ENCODE measurements at regions of chr12 and their contacts with region 1.

Region 1: GRCh38 chr12:91687052-91688017 is 458.3 kb downstream of the BTG1 start:
- DNase-seq: peak; percentile 78
- H3K4me3 Mint-ChIP-seq: peak overlapping the region; percentile 57
- H3K27ac Mint-ChIP-seq: peak overlapping the region; percentile 83
- H3K4me1 Mint-ChIP-seq: peaks cover 24% of the 10 kb centered on the region
- H3K27me3 Mint-ChIP-seq: no peaks in the 10 kb centered on the region

Region 2: DNA sequence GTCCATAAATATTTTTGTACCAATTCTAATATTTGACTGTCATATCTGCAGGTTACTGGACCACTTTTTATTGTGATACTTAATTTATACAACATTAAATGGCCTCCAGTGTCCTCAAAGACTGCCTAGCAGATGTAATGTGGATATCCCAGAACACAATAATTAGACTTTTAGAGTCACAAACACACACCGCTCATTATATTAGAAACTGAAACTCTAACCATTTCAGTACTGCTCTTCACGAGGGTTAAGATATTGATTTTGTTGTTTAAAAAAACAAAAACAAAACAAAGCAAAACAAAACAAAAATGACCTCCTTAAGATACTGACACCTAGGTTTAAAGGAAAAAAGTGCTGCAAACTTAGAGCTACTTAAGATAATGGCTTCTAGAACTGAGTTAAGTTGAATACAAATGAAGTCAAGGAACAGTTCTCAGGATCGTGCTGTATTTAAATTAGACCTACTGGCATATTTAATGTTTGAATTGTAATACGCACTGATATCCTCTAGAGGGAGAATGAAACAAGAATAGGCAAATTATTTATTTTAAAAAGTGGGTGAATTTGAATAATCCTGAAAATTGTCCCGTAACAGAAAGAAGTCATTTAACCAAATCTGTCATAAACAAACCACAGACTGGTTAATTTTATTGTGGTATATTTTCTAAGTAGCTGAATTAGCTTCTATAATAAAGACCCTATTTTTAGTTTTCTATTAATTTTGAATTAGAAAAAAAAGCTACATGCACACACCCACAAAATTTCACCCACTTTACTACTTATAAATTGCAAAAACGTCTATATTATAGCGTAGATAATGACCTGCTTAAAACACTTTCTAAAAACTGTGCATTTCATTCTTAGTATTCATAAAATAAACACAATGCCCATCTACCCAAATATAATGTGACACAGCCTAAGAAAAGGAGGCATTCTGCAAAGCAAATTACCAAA is 109.5 kb before region 1 on chr12:
- intact Hi-C with region 1: loop called (anchors 5 kb)
- DNase-seq: no peak
- H3K4me3 Mint-ChIP-seq: peak overlapping the region; percentile 74
- H3K27ac Mint-ChIP-seq: no peak overlapping the region
- H3K4me1 Mint-ChIP-seq: peaks cover 5% of the 10 kb centered on the region
- H3K27me3 Mint-ChIP-seq: peaks cover 3% of the 10 kb centered on the region

Region 3: DNA sequence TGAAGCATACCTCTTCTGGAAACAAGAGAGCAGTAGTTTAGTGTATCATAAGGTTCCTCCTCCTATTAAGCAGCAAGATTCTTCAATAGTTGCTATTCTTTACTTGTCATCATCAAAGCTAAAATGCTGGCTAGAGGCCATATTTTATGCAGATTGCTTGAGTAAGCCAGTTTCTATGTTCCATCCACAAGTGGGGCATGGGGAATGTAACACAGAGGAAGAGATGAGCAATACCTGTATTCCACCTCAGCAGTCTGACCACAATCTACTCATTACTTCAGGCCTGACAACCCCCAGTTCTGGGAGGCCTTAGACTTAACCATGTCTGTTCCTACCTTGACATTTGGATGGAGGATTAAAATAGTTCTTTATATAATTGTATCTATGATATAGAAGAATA is 34.7 kb after region 1 on chr12:
- intact Hi-C with region 1: loop called (anchors 5 kb)
- DNase-seq: no peak
- H3K4me3 Mint-ChIP-seq: no peak overlapping the region
- H3K27ac Mint-ChIP-seq: no peak overlapping the region
- H3K4me1 Mint-ChIP-seq: peaks cover 2% of the 10 kb centered on the region
- H3K27me3 Mint-ChIP-seq: no peaks in the 10 kb centered on the region

Region 4: DNA sequence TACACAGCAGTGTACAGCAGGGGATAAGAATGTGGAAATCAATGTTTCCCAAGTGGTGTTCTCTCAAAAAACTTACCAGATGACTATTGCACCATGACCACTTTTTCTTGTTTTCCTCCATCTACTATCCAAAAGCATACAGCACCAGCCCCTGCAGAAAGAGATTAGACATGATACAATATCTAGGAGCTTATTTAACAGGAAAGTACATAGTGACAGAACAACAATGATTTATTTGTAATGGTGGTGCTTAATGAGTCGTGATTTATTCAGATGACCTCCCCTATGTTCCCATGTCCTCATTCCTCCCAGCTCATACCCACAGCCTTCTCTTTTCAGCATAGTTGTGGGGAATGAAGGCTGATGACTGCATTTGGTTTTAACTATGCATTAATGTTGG is 44.8 kb after region 1 on chr12:
- intact Hi-C with region 1: no loop called
- DNase-seq: no peak
- H3K4me3 Mint-ChIP-seq: no peak overlapping the region
- H3K27ac Mint-ChIP-seq: no peak overlapping the region
- H3K4me1 Mint-ChIP-seq: no peaks in the 10 kb centered on the region
- H3K27me3 Mint-ChIP-seq: no peaks in the 10 kb centered on the region

Region 5: GRCh38 chr12:91778938-91779400 is 91.6 kb after region 1 on chr12:
- intact Hi-C with region 1: loop called (anchors 1 kb)
- DNase-seq: peak; percentile 77
- H3K4me3 Mint-ChIP-seq: peak overlapping the region; percentile 58
- H3K27ac Mint-ChIP-seq: peak overlapping the region; percentile 73
- H3K4me1 Mint-ChIP-seq: peaks cover 22% of the 10 kb centered on the region
- H3K27me3 Mint-ChIP-seq: peaks cover 2% of the 10 kb centered on the region

Region 6: DNA sequence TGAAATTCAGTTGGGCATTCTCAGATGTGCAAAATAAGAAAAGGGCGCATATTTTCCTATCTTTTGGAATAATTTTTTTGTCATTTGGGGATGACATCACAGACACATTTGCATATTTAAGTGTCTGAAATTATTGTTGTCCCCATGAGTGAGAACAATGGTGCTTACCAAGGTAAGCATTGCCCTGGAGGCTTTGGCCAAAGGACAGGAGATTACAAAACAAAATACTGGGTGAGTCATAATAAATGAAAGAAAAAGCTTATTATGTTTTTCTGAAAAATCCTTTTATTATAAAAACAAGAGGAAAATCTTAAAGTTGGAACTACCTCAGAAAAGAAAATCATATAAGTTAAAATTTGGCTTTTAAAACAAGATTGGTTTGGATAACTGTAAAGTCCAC is 203.4 kb after region 1 on chr12:
- intact Hi-C with region 1: no loop called
- DNase-seq: no peak
- H3K4me3 Mint-ChIP-seq: no peak overlapping the region
- H3K27ac Mint-ChIP-seq: no peak overlapping the region
- H3K4me1 Mint-ChIP-seq: no peaks in the 10 kb centered on the region
- H3K27me3 Mint-ChIP-seq: no peaks in the 10 kb centered on the region

Region 7: GRCh38 chr12:92136965-92137721 is 449.8 kb after region 1 on chr12:
- intact Hi-C with region 1: loop called (anchors 5 kb)
- DNase-seq: peak; percentile 60
- H3K4me3 Mint-ChIP-seq: peak overlapping the region; percentile 99
- H3K27ac Mint-ChIP-seq: peak overlapping the region; percentile 82
- H3K4me1 Mint-ChIP-seq: peaks cover 66% of the 10 kb centered on the region
- H3K27me3 Mint-ChIP-seq: no peaks in the 10 kb centered on the region

Region 8: DNA sequence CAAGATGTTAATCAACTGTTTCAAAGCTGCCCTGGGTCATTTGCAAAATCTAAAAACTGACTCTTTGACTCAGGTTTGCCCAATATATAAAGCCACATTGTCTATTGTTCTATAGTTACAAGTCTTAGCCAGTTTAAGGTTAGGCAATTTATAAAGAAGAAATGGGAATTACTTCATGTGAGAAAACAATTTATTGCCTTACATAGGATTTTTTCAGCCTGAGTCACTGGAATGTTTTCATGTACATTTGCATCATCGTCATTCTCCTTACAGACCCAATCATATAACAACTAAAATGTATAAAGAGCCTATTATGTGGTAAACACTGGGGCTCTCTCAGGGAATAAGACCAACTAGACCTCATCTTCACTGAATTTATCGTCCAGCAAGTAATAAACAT is 915.1 kb after region 1 on chr12:
- intact Hi-C with region 1: loop called (anchors 5 kb)
- DNase-seq: no peak
- H3K4me3 Mint-ChIP-seq: no peak overlapping the region
- H3K27ac Mint-ChIP-seq: peak overlapping the region; percentile 9
- H3K4me1 Mint-ChIP-seq: peaks cover 30% of the 10 kb centered on the region
- H3K27me3 Mint-ChIP-seq: no peaks in the 10 kb centered on the region

Measured in activated CD4-positive, alpha-beta T cell treated with anti-CD3 and anti-CD28 coated beads, Interleukin-2, amount 10 ng/mL, durations not matched to agents 24 days and 14 days (primary cell).